Activated T-helper 2 cell treated with anti-CD3 and anti-CD28 coated beads, Interferon-gamma antibody, Interleukin-2, Interleukin-4, amounts not matched to agents 10 μg/mL and 5 μg/mL and 100 μg/mL, durations not matched to agents 14 hours and 24 hours and 36 hours (primary cell): ENCODE measurements at regions of chr7 and their contacts with region 1.

Region 1: GRCh38 chr7:7795203-7796135 is 77.1 kb upstream of the RPA3 start:
- DNase-seq: no peak
- H3K4me3 Mint-ChIP-seq: no peak overlapping the region
- H3K27ac Mint-ChIP-seq: no peak overlapping the region
- H3K4me1 Mint-ChIP-seq: peaks cover 16% of the 10 kb centered on the region
- H3K27me3 Mint-ChIP-seq: no peaks in the 10 kb centered on the region

Region 2: DNA sequence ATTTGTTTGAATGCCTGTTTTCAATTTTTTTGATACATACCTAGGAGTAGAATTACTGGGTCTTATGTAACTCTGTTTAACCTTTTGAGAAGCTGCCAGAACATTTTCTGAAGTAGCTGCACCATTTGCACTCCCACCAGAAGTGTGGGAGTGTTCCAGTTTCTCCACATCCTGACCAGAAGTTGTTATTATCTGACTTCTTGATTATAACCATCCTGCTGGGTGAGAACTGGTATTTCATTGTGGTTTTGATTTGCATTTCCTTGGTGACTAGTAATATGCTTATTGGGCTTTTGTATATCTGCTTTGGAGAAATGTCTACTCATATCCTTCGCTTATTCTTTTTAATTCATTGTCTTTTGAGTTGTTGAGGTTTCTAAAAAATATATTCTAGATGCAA is 55.9 kb after region 1 on chr7:
- intact Hi-C with region 1: loop called (anchors 5 kb)
- DNase-seq: no peak
- H3K4me3 Mint-ChIP-seq: no peak overlapping the region
- H3K27ac Mint-ChIP-seq: no peak overlapping the region
- H3K4me1 Mint-ChIP-seq: peaks cover 35% of the 10 kb centered on the region
- H3K27me3 Mint-ChIP-seq: no peaks in the 10 kb centered on the region

Region 3: DNA sequence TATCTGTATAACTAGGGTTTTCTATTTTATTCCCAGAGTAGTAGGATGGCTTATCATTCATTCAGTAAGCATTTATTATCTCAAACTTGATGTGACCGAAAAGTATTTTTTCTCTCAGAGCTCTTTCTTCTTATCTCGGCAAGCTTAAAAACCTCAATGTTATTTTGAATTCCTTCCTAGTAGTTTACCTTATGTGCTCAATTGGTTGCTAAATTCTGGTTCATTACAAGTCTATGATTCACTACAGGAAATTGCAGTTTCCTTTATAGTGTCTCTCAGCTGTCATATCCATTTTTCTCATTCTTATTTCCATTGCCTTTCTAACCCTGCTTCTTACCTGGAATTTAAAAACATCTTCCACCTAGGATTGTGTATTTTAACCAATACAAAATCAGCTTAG is 479.1 kb after region 1 on chr7:
- intact Hi-C with region 1: no loop called
- DNase-seq: no peak
- H3K4me3 Mint-ChIP-seq: no peak overlapping the region
- H3K27ac Mint-ChIP-seq: no peak overlapping the region
- H3K4me1 Mint-ChIP-seq: peaks cover 3% of the 10 kb centered on the region
- H3K27me3 Mint-ChIP-seq: peaks cover 34% of the 10 kb centered on the region